Aorta (tissue), 5 donors: ENCODE measurements at regions of chr12 and their contacts with region 1.

Region 1: DNA sequence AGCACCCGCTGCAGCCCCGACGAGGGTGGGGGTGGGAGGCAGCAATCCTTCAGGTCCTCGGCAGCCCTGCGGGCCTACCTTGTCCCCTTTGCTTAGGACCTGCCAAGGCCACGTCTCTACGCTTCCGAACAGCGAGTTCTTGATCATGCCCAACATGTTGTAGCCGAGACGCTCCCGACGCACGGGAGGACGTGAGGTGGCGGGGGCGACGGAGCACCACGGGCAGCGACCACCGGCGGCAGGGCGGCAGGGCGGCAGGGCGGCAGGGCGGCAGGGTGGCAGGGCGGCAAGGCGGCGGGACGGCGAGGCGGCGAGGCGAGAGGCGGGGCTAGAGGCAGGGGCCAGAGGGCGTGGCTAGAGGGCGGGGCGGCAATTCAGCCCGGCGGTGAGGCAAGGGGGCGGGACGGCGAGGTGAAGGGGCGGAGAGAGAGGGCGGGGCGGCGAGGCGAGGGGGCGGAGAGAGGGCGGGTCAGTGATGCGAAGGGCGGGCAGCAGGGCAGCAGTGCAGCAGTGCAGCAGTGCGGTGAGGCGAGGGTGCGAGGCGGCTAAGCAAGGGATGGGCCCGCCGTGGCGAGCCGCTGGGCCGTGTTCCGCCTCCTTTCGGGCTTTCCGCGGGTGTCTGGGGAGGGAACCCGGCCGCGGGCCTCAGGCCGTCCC is at the start of gene HEBP1:
- DNase-seq: peak; percentile 97 to 99
- ATAC-seq: peak; percentile 98
- H3K4me3 ChIP-seq: peak within 1 kb of the TSS; percentile 84 to 89
- H3K27ac ChIP-seq: peak within 1 kb of the TSS; percentile 83 to 95
- H3K4me1 ChIP-seq: peaks cover 0 to 1% of the 10 kb centered on the region in 2 donors
- H3K27me3 ChIP-seq: no peaks in the 10 kb centered on the region
- total RNA-seq, gene HEBP1: 55.8 to 73.6 TPM

Region 2: DNA sequence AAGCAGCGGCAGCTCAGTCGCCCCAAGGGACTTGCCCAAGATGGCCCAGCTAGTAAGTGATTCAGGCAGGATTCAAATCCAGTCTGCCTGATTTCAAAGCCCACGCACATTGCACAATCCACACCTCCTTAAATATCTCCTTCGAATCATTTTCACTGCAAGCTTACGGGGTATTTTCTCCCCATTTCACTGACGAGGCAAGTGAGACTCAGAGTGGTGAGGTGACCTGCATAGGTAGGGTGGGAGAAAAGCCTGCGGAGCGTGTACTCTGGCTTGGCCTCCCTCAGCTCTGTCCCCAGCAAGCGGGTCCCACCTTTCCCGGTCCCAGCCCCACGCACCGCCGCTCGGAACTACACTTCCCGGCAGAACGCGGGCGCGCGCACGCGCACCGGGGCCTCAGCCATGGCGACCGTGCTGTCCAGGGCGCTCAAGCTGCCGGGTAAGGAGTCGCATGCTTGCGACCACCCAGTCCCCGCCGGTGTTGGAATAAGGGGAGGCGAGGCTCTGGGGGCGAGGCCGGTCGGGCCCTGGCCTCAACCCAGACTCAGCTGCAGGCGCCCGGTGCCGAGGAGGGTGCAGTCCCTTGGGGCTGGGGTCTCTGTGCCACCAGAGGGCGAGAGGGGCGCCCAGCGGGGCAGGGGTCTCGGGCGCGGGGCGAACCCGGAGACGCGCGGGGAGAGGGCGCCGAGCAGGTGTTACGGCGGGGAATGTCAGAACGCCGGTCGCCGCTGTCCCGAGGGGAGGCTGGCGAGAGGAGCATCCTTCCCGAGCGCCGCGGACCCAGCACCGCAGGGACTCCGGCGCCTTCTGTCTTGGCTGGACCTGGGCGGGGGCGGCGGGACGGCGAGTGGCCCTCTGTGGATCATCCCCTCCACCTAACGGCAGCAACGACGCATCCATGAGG is 44.2 kb after region 1 on chr12 and contains the start of gene FAM234B:
- intact Hi-C with region 1: loop called in 1 of 2 experiments (anchors 5 kb)
- DNase-seq: peak; percentile 90 to 95
- ATAC-seq: peak; percentile 95
- H3K4me3 ChIP-seq: peak within 1 kb of the TSS; percentile 55 to 93
- H3K27ac ChIP-seq: no peak within 1 kb of the TSS
- H3K4me1 ChIP-seq: peaks cover 0 to 2% of the 10 kb centered on the region in 2 donors
- H3K27me3 ChIP-seq: no peaks in the 10 kb centered on the region
- total RNA-seq, gene FAM234B: 5.2 to 6.8 TPM